B cell (primary cell): ENCODE measurements at regions of chr16 and their contacts with region 1.

Region 1: GRCh38 chr16:47141773-47142485 is 1.8 kb downstream of the NETO2 start:
- DNase-seq: peak; percentile 87
- ATAC-seq: peak; percentile 55
- H3K4me3 ChIP-seq: peak overlapping the region; percentile 42 to 81 (median 64)
- H3K4me3 Mint-ChIP-seq: peak overlapping the region; percentile 94
- H3K27ac ChIP-seq: no peak overlapping the region
- H3K27ac Mint-ChIP-seq: peak overlapping the region; percentile 54
- H3K4me1 ChIP-seq: peaks cover 9 to 16% of the 10 kb centered on the region in 2 donors
- H3K4me1 Mint-ChIP-seq: peaks cover 19% of the 10 kb centered on the region
- H3K27me3 ChIP-seq: peaks cover 0 to 9% (median 0%) of the 10 kb centered on the region in 4 experiments
- H3K27me3 Mint-ChIP-seq: no peaks in the 10 kb centered on the region
- CTCF ChIP-seq: peak; percentile 96

Region 2: DNA sequence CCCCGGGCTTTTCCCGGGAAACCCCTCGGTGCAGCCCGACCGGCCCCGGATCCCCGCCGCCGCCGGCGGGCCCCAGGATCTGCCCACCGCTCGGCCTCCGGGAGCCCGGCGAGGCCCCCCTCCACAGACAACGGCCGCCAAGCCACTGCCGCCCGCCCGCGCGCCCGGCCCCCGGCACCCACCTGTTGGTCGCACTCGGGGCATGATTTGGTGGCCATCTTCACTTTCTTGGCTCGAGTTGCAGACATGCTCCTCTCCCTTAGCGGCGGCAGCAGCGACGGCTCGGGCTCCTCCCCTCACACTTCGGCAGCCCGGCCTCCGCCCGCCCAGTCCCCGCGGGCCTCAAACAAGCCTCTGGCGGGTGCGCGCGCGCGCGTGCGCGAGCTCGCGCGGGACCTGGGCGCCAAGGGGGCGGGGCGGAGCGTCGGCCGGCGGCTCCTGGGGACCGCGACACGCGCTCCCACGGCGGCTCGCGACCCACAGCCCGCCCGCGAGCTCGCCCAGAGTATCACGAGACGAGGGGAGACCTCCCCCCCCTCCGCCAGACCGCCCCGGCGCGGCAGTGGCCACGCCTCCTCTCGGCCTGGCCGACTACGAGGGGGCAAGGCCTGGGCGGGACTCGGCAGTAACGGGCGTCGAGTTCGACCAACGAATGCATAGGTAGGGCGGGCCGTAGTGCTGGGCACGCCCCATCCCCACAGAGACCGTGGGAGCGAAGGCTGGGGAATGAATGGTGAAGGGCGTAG is 310.9 kb before region 1 on chr16 and contains the start of gene C16orf87:
- CTCF ChIA-PET with region 1: no interaction called
- POLR2A ChIA-PET with region 1: no interaction called
- intact Hi-C with region 1: loop called (anchors 1 kb)
- DNase-seq: peak; percentile 97
- ATAC-seq: peak; percentile 92
- H3K4me3 ChIP-seq: peak within 1 kb of the TSS; percentile 75 to 88 (median 82)
- H3K4me3 Mint-ChIP-seq: peak within 1 kb of the TSS; percentile 95
- H3K27ac ChIP-seq: peak within 1 kb of the TSS; percentile 55 to 85
- H3K27ac Mint-ChIP-seq: peak within 1 kb of the TSS; percentile 93
- H3K4me1 ChIP-seq: peaks cover 34 to 47% of the 10 kb centered on the region in 2 donors
- H3K4me1 Mint-ChIP-seq: peaks cover 59% of the 10 kb centered on the region
- H3K27me3 ChIP-seq: no peaks in the 10 kb centered on the region
- H3K27me3 Mint-ChIP-seq: no peaks in the 10 kb centered on the region
- CTCF ChIP-seq: no peak
- total RNA-seq, gene C16orf87: 11.3 and 12.5 TPM in 2 replicates

Region 3: GRCh38 chr16:46973207-46973995 is 168.5 kb before region 1 on chr16 and contains the start of gene DNAJA2:
- CTCF ChIA-PET with region 1: interaction called, 9 read pairs
- POLR2A ChIA-PET with region 1: no interaction called
- intact Hi-C with region 1: loop called (anchors 1 kb)
- DNase-seq: peak; percentile 96
- ATAC-seq: peak; percentile 94
- H3K4me3 ChIP-seq: peak within 1 kb of the TSS; percentile 77 to 94 (median 85)
- H3K4me3 Mint-ChIP-seq: peak within 1 kb of the TSS; percentile 94
- H3K27ac ChIP-seq: peak within 1 kb of the TSS; percentile 96 to 97
- H3K27ac Mint-ChIP-seq: peak within 1 kb of the TSS; percentile 97
- H3K4me1 ChIP-seq: peaks cover 21 to 22% of the 10 kb centered on the region in 2 donors
- H3K4me1 Mint-ChIP-seq: peaks cover 41% of the 10 kb centered on the region
- H3K27me3 ChIP-seq: no peaks in the 10 kb centered on the region
- H3K27me3 Mint-ChIP-seq: no peaks in the 10 kb centered on the region
- CTCF ChIP-seq: no peak
- total RNA-seq, gene DNAJA2: 57.0 and 57.3 TPM in 2 replicates

Region 4: GRCh38 chr16:47162670-47163420 is 20.9 kb after region 1 on chr16:
- CTCF ChIA-PET with region 1: interaction called, 22 read pairs
- POLR2A ChIA-PET with region 1: no interaction called
- intact Hi-C with region 1: no loop called
- DNase-seq: no peak
- ATAC-seq: no peak
- H3K4me3 ChIP-seq: no peak overlapping the region
- H3K4me3 Mint-ChIP-seq: no peak overlapping the region
- H3K27ac ChIP-seq: no peak overlapping the region
- H3K27ac Mint-ChIP-seq: no peak overlapping the region
- H3K4me1 ChIP-seq: no peaks in the 10 kb centered on the region
- H3K4me1 Mint-ChIP-seq: no peaks in the 10 kb centered on the region
- H3K27me3 ChIP-seq: no peaks in the 10 kb centered on the region
- H3K27me3 Mint-ChIP-seq: no peaks in the 10 kb centered on the region
- CTCF ChIP-seq: no peak

Region 5: GRCh38 chr16:47213761-47214440 is 72.0 kb after region 1 on chr16:
- CTCF ChIA-PET with region 1: no interaction called
- POLR2A ChIA-PET with region 1: no interaction called
- intact Hi-C with region 1: no loop called
- DNase-seq: no peak
- ATAC-seq: no peak
- H3K4me3 ChIP-seq: no peak overlapping the region
- H3K4me3 Mint-ChIP-seq: no peak overlapping the region
- H3K27ac ChIP-seq: no peak overlapping the region
- H3K27ac Mint-ChIP-seq: no peak overlapping the region
- H3K4me1 ChIP-seq: no peaks in the 10 kb centered on the region
- H3K4me1 Mint-ChIP-seq: no peaks in the 10 kb centered on the region
- H3K27me3 ChIP-seq: no peaks in the 10 kb centered on the region
- H3K27me3 Mint-ChIP-seq: no peaks in the 10 kb centered on the region
- CTCF ChIP-seq: no peak

Region 6: DNA sequence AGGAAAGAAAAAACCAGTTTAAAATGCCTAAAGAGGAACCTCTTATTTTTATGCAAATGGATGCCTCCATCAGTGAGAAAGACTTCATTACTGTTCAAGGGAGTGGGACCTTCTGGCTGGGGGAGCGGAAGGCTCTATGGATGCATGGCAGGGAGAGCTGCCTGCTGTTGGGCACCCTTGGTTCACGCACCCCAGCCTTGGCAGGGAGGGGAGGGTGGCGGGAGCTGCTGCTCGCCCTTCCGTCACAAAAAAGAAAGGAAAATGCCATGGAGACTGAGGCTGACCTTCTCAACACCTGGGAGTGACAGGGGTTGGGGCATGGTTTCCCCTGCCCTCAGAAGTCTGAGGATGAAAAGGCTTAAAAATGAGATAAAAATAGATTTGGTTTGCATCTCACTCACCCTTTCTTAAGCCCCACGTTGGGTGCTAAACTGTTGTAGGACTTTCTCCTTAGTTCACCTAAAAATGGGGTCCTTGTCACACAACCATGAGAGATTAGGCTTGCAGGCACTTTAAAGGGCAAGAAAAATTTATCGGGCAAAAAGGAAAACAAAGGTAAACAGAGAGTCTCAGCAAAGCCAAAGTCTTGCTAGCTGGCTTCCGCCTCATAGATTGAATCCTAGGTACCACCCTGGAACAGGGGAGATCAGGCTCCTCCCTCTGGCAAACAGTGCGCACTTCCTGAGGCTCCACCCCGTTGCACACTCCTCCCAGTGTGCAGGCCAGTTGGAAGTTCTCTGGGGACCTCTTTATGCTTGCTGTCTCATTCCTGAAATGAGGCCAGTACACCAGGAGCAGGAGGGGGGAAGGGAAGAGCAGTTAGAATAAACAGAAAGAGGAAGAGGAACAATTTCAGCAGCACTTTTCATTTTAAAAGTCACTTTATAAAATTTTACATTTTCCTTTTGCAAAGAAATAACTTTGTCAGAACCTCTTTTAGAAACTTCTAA is 350.8 kb after region 1 on chr16:
- CTCF ChIA-PET with region 1: interaction called, 4 read pairs
- POLR2A ChIA-PET with region 1: no interaction called
- intact Hi-C with region 1: loop called (anchors 10 kb)
- DNase-seq: peak; percentile 72
- ATAC-seq: peak; percentile 85
- H3K4me3 ChIP-seq: peak overlapping the region; percentile 19 to 71 (median 37)
- H3K4me3 Mint-ChIP-seq: peak overlapping the region; percentile 96
- H3K27ac ChIP-seq: peak overlapping the region; percentile 81 to 85
- H3K27ac Mint-ChIP-seq: peak overlapping the region; percentile 98
- H3K4me1 ChIP-seq: peaks cover 37 to 40% of the 10 kb centered on the region in 2 donors
- H3K4me1 Mint-ChIP-seq: peaks cover 55% of the 10 kb centered on the region
- H3K27me3 ChIP-seq: no peaks in the 10 kb centered on the region
- H3K27me3 Mint-ChIP-seq: no peaks in the 10 kb centered on the region
- CTCF ChIP-seq: no peak

Region 7: DNA sequence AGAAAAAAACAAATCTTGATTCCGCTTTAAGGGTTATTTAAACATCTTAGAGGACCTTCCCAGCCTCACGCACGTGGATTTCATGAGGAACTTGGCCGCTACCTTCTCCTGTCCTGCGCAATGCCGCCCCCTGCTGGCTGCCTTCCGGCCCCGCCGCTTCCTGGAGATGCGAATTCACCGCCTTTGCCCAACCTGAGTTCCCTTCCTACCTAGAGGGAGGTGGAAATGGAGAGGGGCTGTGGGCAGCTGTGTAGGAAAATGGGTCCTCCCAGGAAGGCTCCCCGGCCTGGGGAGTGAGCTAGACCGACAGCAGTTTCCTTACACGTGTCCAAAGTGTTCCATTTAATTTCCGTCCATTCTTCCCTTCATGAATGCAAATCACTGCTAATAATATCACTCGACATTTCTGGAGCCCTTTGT is 1014.9 kb after region 1 on chr16:
- CTCF ChIA-PET with region 1: interaction called, 60 read pairs
- POLR2A ChIA-PET with region 1: no interaction called
- intact Hi-C with region 1: loop called (anchors 1 kb)
- DNase-seq: peak; percentile 82
- ATAC-seq: peak; percentile 49
- H3K4me3 ChIP-seq: no peak overlapping the region
- H3K4me3 Mint-ChIP-seq: no peak overlapping the region
- H3K27ac ChIP-seq: no peak overlapping the region
- H3K27ac Mint-ChIP-seq: no peak overlapping the region
- H3K4me1 ChIP-seq: peaks cover 0 to 6% of the 10 kb centered on the region in 2 donors
- H3K4me1 Mint-ChIP-seq: no peaks in the 10 kb centered on the region
- H3K27me3 ChIP-seq: peaks cover 0 to 10% (median 2%) of the 10 kb centered on the region in 4 experiments
- H3K27me3 Mint-ChIP-seq: peaks cover 28% of the 10 kb centered on the region
- CTCF ChIP-seq: peak; percentile 95

Region 8: GRCh38 chr16:48623304-48624016 is 1481.5 kb after region 1 on chr16:
- CTCF ChIA-PET with region 1: interaction called, 3 read pairs
- POLR2A ChIA-PET with region 1: no interaction called
- intact Hi-C with region 1: loop called (anchors 5 kb)
- DNase-seq: peak; percentile 83
- ATAC-seq: peak; percentile 98
- H3K4me3 ChIP-seq: peak overlapping the region; percentile 39 to 62 (median 59)
- H3K4me3 Mint-ChIP-seq: peak overlapping the region; percentile 85
- H3K27ac ChIP-seq: no peak overlapping the region
- H3K27ac Mint-ChIP-seq: no peak overlapping the region
- H3K4me1 ChIP-seq: peaks cover 14 to 28% of the 10 kb centered on the region in 2 donors
- H3K4me1 Mint-ChIP-seq: peaks cover 22% of the 10 kb centered on the region
- H3K27me3 ChIP-seq: peaks cover 0 to 3% (median 0%) of the 10 kb centered on the region in 4 experiments
- H3K27me3 Mint-ChIP-seq: peaks cover 4% of the 10 kb centered on the region
- CTCF ChIP-seq: peak; percentile 100